ENCODE measurements at regions of chr2 and their contacts with region 1.

Region 1: GRCh38 chr2:42957109-42957860 is 164.9 kb upstream of the HAAO start:
- DNase-seq: peak; percentile 50 to 71
- H3K4me3 ChIP-seq: no peak overlapping the region
- H3K4me3 Mint-ChIP-seq: no peak overlapping the region
- H3K27ac Mint-ChIP-seq: no peak overlapping the region
- H3K4me1 ChIP-seq: peaks cover 51% of the 10 kb centered on the region
- H3K4me1 Mint-ChIP-seq: peaks cover 19% of the 10 kb centered on the region
- H3K27me3 ChIP-seq: no peaks in the 10 kb centered on the region
- H3K27me3 Mint-ChIP-seq: no peaks in the 10 kb centered on the region
- CTCF ChIP-seq: no peak

Region 2: GRCh38 chr2:42931146-42931817 is 26.0 kb before region 1 on chr2:
- CTCF ChIA-PET with region 1: no interaction called
- POLR2A ChIA-PET with region 1: no interaction called
- intact Hi-C with region 1: no loop called
- DNase-seq: no peak
- H3K4me3 ChIP-seq: no peak overlapping the region
- H3K4me3 Mint-ChIP-seq: no peak overlapping the region
- H3K27ac Mint-ChIP-seq: peak overlapping the region; percentile 48
- H3K4me1 ChIP-seq: peaks cover 46% of the 10 kb centered on the region
- H3K4me1 Mint-ChIP-seq: peaks cover 30% of the 10 kb centered on the region
- H3K27me3 ChIP-seq: no peaks in the 10 kb centered on the region
- H3K27me3 Mint-ChIP-seq: no peaks in the 10 kb centered on the region
- CTCF ChIP-seq: peak in 1 of 2 experiments; percentile 16

Region 3: DNA sequence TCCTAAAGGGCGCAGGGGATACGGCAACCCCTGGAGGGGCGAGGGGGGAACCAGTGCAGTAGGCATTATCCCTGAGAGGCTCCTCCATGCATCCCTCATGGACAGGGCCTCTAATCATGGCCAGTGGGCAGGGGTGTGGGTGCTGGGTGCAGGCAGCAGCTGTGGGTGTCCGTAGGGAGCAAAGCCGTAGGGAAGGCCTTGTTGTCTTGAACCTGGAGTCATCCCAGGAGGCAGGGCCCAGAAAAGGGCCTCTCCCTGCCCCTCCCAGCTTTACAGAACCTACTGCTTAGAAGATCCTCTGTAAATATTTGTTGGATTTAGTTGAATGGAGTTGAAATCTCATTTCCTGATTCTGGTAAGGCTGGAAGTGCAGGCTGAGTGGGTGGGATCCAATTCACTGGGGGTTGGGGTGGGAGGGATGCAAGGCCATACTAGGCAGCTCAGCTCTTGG is 42.1 kb after region 1 on chr2:
- CTCF ChIA-PET with region 1: no interaction called
- POLR2A ChIA-PET with region 1: no interaction called
- intact Hi-C with region 1: loop called (anchors 1 kb)
- DNase-seq: peak; percentile 73 to 78
- H3K4me3 ChIP-seq: no peak overlapping the region
- H3K4me3 Mint-ChIP-seq: no peak overlapping the region
- H3K27ac Mint-ChIP-seq: peak overlapping the region; percentile 74
- H3K4me1 ChIP-seq: peaks cover 31% of the 10 kb centered on the region
- H3K4me1 Mint-ChIP-seq: peaks cover 29% of the 10 kb centered on the region
- H3K27me3 ChIP-seq: no peaks in the 10 kb centered on the region
- H3K27me3 Mint-ChIP-seq: no peaks in the 10 kb centered on the region
- CTCF ChIP-seq: no peak

Measured in Caco-2 (cell line).